WTC11 (cell line): ENCODE measurements at regions of chr17 and their contacts with region 1.

Region 1: DNA sequence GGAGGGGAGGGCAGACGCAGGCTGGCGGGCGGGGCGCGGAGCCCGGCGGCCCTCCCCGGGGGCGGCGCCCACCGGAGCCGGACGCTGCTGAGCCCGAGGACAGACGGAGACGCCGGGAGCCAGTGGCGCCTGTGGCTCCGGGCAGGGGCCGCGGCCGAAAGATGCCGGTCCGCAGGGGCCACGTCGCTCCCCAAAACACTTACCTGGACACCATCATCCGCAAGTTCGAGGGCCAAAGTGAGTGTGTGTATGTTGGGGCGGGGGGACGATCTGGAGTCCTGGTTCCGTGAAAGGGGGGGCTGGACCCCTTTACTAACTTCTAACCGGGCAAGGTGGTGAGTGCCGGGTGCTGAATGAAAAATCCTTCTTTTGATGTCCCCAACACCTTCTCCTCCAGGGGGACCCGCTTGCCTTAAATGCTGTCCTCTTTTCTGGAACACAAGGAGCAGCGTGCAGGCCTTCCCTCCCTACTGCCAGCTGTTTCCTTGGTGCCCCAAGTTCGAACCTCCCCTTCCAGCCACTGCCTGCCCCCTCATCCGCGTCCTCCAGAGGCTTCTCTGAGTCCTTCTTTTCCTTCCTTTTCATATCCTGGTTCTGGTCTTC is at the start of gene KCNH6:
- DNase-seq: no peak
- ATAC-seq: peak; percentile 11
- H3K4me3 Mint-ChIP-seq: peak within 1 kb of the TSS; percentile 67
- H3K27ac Mint-ChIP-seq: no peak within 1 kb of the TSS; the same call in 1 of the 2 replicates
- H3K4me1 Mint-ChIP-seq: peaks cover 34% of the 10 kb centered on the region
- H3K27me3 Mint-ChIP-seq: peaks cover 4% of the 10 kb centered on the region
- CTCF ChIP-seq: no peak
- total RNA-seq, gene KCNH6: 2.1 to 2.4 TPM (median 2.3 TPM) in 3 replicates

Region 2: GRCh38 chr17:63549946-63550807 is 26.8 kb after region 1 on chr17 and contains the start of gene DCAF7:
- CTCF ChIA-PET with region 1: interaction called, 16 read pairs
- POLR2A ChIA-PET with region 1: interaction called, 3 read pairs
- DNase-seq: peak; percentile 99
- ATAC-seq: peak; percentile 92
- H3K4me3 Mint-ChIP-seq: peak within 1 kb of the TSS; percentile 97
- H3K27ac Mint-ChIP-seq: peak within 1 kb of the TSS; percentile 98
- H3K4me1 Mint-ChIP-seq: peaks cover 18% of the 10 kb centered on the region
- H3K27me3 Mint-ChIP-seq: no peaks in the 10 kb centered on the region
- CTCF ChIP-seq: no peak
- total RNA-seq, gene DCAF7: 91.5 to 99.8 TPM (median 97.8 TPM) in 3 replicates